CD14-positive monocyte (primary cell): ENCODE measurements at regions of chr15 and their contacts with region 1.

Region 1: GRCh38 chr15:56464893-56465520 is at the start of gene MNS1:
- DNase-seq: peak; percentile 81 to 91 (median 90)
- H3K4me3 ChIP-seq: peak within 1 kb of the TSS; percentile 59 to 81 (median 60)
- H3K4me3 Mint-ChIP-seq: peak within 1 kb of the TSS; percentile 98 to 99
- H3K27ac ChIP-seq: peak within 1 kb of the TSS in 1 of 2 donors; percentile 36
- H3K27ac Mint-ChIP-seq: peak within 1 kb of the TSS; percentile 74 to 92 (median 84)
- H3K4me1 ChIP-seq: peaks cover 14 to 27% of the 10 kb centered on the region in 2 donors
- H3K4me1 Mint-ChIP-seq: peaks cover 29% of the 10 kb centered on the region
- H3K27me3 ChIP-seq: no peaks in the 10 kb centered on the region
- H3K27me3 Mint-ChIP-seq: no peaks in the 10 kb centered on the region
- CTCF ChIP-seq: no peak
- polyA plus RNA-seq, gene MNS1: 0.03 to 0.29 TPM in 2 of 3 donors, not detected in the other

Region 2: DNA sequence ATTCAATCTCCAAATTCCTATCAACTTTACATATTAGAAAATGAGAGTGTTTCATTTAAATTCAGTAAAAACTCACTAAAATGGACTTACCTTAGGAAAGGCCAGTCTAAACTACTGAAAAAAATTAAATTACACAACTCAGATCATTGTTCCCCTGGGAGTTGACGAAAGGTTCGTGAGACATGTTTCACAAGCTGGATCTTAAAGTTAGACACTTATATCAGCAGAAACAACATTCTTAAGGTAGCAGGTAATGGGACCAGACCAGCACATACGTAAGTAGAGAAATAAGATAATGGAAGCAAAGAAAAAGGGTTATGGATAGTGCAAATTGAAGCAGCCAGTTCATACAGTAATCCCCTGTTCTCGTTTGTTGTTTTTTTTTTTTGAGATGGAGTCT is 230.2 kb before region 1 on chr15:
- intact Hi-C with region 1: loop called in 1 of 2 experiments (anchors 5 kb)
- DNase-seq: no peak
- H3K4me3 ChIP-seq: no peak overlapping the region
- H3K4me3 Mint-ChIP-seq: no peak overlapping the region
- H3K27ac ChIP-seq: no peak overlapping the region
- H3K27ac Mint-ChIP-seq: no peak overlapping the region
- H3K4me1 ChIP-seq: no peaks in the 10 kb centered on the region
- H3K4me1 Mint-ChIP-seq: peaks cover 13% of the 10 kb centered on the region
- H3K27me3 ChIP-seq: no peaks in the 10 kb centered on the region
- H3K27me3 Mint-ChIP-seq: no peaks in the 10 kb centered on the region
- CTCF ChIP-seq: no peak

Region 3: GRCh38 chr15:56411122-56411749 is 53.8 kb before region 1 on chr15:
- intact Hi-C with region 1: no loop called
- DNase-seq: no peak
- H3K4me3 ChIP-seq: no peak overlapping the region
- H3K4me3 Mint-ChIP-seq: no peak overlapping the region
- H3K27ac ChIP-seq: no peak overlapping the region
- H3K27ac Mint-ChIP-seq: no peak overlapping the region
- H3K4me1 ChIP-seq: no peaks in the 10 kb centered on the region
- H3K4me1 Mint-ChIP-seq: no peaks in the 10 kb centered on the region
- H3K27me3 ChIP-seq: no peaks in the 10 kb centered on the region
- H3K27me3 Mint-ChIP-seq: no peaks in the 10 kb centered on the region
- CTCF ChIP-seq: no peak

Region 4: GRCh38 chr15:56428821-56429458 is 36.1 kb before region 1 on chr15:
- intact Hi-C with region 1: no loop called
- DNase-seq: no peak
- H3K4me3 ChIP-seq: no peak overlapping the region
- H3K4me3 Mint-ChIP-seq: no peak overlapping the region
- H3K27ac ChIP-seq: no peak overlapping the region
- H3K27ac Mint-ChIP-seq: no peak overlapping the region
- H3K4me1 ChIP-seq: no peaks in the 10 kb centered on the region
- H3K4me1 Mint-ChIP-seq: no peaks in the 10 kb centered on the region
- H3K27me3 ChIP-seq: no peaks in the 10 kb centered on the region
- H3K27me3 Mint-ChIP-seq: no peaks in the 10 kb centered on the region
- CTCF ChIP-seq: peak; percentile 49

Region 5: DNA sequence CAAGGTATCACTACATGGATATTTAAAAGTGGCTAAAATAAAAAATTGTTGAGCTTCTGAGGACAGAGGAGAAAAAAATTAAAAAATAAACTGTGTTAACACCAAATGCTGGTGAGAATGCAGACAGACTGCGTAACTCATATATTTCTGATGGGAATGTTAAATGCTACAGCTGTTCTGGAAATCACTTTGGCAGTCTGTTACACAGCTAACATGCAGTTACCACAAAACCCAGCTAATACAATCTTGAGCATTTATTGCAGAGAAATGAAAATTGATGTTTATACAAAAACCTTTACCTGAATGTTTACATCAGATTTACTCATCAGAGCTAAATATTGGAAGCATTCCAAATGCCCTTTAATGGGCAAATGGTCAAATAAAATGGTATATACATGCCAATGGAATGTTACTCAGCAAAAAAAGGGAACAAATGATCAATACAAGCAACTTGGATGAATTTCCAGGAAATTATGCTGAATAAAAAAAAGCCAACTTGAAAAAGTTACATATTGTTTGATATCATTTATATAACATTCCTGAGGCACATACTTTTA is 24.7 kb before region 1 on chr15:
- intact Hi-C with region 1: no loop called
- DNase-seq: no peak
- H3K4me3 ChIP-seq: no peak overlapping the region
- H3K4me3 Mint-ChIP-seq: no peak overlapping the region
- H3K27ac ChIP-seq: no peak overlapping the region
- H3K27ac Mint-ChIP-seq: no peak overlapping the region
- H3K4me1 ChIP-seq: no peaks in the 10 kb centered on the region
- H3K4me1 Mint-ChIP-seq: no peaks in the 10 kb centered on the region
- H3K27me3 ChIP-seq: no peaks in the 10 kb centered on the region
- H3K27me3 Mint-ChIP-seq: no peaks in the 10 kb centered on the region
- CTCF ChIP-seq: no peak